Common myeloid progenitor, CD34-positive (primary cell): ENCODE measurements at regions of chr17 and their contacts with region 1.

Region 1: GRCh38 chr17:76014184-76014924 is 12.8 kb downstream of the EVPL start:
- DNase-seq: peak; percentile 67 to 86 (median 80)
- H3K4me3 ChIP-seq: no peak overlapping the region
- H3K27ac ChIP-seq: no peak overlapping the region
- H3K4me1 ChIP-seq: peaks cover 0 to 7% (median 3%) of the 10 kb centered on the region in 4 experiments
- H3K27me3 ChIP-seq: no peaks in the 10 kb centered on the region

Region 2: DNA sequence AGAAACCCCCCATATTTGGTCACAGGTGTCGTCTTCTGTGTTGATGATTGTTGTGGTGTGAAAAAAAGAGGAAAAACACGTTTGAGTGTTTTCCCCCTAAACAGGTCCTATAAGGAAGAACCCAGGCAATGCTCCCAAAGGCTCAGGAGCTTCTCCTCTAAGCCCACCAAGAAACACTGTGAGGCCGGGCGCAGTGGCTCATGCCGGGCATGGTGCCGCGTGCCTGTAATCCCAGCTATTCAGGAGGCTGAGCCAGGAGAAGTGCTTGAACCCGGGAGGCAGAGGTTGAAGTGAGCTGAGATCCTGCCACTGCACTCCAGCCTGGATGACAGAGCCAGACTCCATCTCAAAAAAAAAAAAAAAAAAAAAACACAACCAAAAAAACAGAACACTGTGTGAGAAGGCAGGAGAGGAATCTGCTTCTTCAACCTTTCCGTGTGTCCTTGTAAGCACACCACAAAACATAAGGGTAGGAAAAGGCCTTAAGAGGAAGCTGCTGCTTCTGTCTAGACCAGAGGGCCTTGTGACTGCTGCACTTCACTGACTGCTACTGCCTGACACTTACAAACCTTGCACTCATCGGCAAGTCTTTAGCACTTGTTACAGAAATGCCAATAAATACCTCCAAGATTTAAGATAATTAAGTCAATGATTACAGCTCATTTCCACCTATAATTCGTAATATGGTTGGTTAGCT is 869.4 kb before region 1 on chr17:
- CTCF ChIA-PET with region 1: no interaction called
- POLR2A ChIA-PET with region 1: no interaction called
- DNase-seq: no peak
- H3K4me3 ChIP-seq: no peak overlapping the region
- H3K27ac ChIP-seq: no peak overlapping the region
- H3K4me1 ChIP-seq: peaks cover 0 to 8% (median 3%) of the 10 kb centered on the region in 4 experiments
- H3K27me3 ChIP-seq: no peaks in the 10 kb centered on the region

Region 3: DNA sequence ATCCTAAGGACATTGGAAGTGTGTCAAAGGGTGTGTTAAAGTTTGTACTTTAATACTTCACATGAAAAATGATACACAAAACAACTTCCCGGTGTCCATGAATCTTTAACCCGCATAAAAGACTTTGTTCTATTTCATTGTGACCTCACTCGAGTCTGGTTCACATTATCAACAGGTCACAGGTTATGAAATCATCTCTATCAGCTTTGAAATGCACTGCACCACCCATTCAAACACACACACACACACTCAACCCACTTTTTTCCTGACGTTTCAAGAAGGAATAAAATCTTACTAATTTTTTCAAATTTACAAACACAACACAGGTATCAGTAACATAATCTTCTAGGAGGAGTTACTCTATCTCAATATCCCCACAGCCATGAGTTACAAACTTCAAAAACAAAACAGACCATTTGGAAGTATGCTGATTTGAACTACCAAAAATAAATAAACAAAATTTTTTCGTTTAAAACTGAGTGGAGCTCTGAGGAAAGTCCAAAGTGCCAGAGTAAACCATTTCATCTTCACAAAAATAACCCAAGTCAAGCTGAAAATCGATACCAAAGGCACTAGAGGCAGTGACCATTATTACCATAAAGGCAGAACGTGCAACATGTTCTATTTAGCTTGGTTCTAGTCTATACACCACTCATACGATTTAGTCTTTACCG is 38.0 kb before region 1 on chr17:
- CTCF ChIA-PET with region 1: no interaction called
- POLR2A ChIA-PET with region 1: no interaction called
- DNase-seq: no peak
- H3K4me3 ChIP-seq: no peak overlapping the region
- H3K27ac ChIP-seq: no peak overlapping the region
- H3K4me1 ChIP-seq: peaks cover 10 to 30% (median 20%) of the 10 kb centered on the region in 4 experiments
- H3K27me3 ChIP-seq: no peaks in the 10 kb centered on the region

Region 4: DNA sequence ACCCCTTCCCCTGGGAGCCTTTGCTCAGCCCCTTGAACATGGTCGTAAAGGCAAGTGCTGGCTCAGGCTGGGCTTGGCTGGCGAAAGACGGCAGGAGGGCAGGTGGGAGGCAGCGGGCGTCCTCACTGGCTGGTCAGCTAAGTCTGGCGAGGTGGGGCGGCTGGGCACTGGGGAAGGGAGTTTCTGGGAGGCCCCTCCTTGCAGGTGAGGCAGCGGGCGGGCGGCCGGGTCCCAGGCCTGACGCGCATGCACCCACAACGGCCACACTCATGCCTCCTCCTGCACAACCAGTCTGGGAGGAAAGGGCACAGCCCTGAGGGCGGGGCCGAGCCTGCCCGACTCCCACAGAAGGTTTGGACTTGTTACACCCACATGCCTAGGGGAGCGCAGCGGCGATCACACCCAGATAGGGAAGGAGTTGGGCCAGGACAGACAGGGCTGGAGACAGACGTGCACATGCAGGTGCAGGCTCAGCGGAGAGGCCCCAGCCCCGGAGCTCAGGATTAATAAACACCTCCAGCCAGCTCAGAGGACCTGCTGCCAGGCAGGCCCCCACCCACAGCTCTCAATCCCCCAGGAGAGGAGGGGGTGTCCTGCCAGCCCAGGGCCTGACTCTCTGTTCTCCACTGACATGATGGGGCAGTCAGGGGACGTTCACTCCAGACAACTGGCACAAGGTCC is 12.9 kb after region 1 on chr17 and contains the start of gene EVPL:
- CTCF ChIA-PET with region 1: interaction called, 183 read pairs
- POLR2A ChIA-PET with region 1: no interaction called
- DNase-seq: peak in 1 of 3 donors; percentile 29
- H3K4me3 ChIP-seq: peak within 1 kb of the TSS in 2 of 7 experiments; percentile 19 to 55
- H3K27ac ChIP-seq: no peak within 1 kb of the TSS
- H3K4me1 ChIP-seq: peaks cover 0 to 42% (median 38%) of the 10 kb centered on the region in 4 experiments
- H3K27me3 ChIP-seq: no peaks in the 10 kb centered on the region

Region 5: GRCh38 chr17:76053246-76054116 is 39.1 kb after region 1 on chr17:
- CTCF ChIA-PET with region 1: interaction called, 61 read pairs
- POLR2A ChIA-PET with region 1: interaction called, 4 read pairs
- DNase-seq: no peak
- H3K4me3 ChIP-seq: no peak overlapping the region
- H3K27ac ChIP-seq: no peak overlapping the region
- H3K4me1 ChIP-seq: no peaks in the 10 kb centered on the region
- H3K27me3 ChIP-seq: no peaks in the 10 kb centered on the region

Region 6: DNA sequence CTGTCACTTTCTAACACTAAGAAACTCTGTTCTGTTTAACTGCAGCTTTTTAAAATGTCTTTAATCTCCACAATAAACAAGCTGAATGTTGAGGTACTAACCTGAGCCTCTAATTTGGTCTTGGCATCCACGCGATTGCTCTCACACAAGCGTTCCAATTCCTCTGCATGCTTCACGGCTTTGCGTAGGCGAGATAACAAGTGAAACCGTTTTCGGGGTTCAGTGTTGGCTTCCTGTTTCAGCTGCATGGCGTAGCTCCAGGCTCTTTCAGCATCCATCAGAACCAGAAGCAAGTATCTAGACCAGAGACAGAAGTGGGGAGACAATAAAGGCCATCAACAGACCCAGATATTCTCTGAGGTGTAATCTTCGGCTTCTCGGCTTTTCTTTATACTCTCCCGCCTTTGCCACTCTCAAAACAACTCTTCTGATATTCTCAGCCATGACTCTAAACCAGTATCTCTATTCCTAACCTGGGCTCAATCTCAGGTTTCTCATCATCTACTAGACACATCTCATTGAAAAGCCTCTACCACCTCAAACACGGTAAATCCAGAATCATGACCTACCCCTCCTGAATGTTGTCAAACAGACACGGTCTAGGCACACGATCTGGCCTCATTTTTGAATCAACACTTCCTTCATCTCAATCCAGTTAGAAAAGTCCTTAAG is 49.7 kb after region 1 on chr17:
- CTCF ChIA-PET with region 1: interaction called, 61 read pairs
- POLR2A ChIA-PET with region 1: no interaction called
- DNase-seq: peak in 1 of 3 donors; percentile 24
- H3K4me3 ChIP-seq: no peak overlapping the region
- H3K27ac ChIP-seq: no peak overlapping the region
- H3K4me1 ChIP-seq: peaks cover 0 to 4% (median 0%) of the 10 kb centered on the region in 4 experiments
- H3K27me3 ChIP-seq: no peaks in the 10 kb centered on the region